CD4-positive, alpha-beta memory T cell (primary cell): ENCODE measurements at regions of chr1 and their contacts with region 1.

Region 1: DNA sequence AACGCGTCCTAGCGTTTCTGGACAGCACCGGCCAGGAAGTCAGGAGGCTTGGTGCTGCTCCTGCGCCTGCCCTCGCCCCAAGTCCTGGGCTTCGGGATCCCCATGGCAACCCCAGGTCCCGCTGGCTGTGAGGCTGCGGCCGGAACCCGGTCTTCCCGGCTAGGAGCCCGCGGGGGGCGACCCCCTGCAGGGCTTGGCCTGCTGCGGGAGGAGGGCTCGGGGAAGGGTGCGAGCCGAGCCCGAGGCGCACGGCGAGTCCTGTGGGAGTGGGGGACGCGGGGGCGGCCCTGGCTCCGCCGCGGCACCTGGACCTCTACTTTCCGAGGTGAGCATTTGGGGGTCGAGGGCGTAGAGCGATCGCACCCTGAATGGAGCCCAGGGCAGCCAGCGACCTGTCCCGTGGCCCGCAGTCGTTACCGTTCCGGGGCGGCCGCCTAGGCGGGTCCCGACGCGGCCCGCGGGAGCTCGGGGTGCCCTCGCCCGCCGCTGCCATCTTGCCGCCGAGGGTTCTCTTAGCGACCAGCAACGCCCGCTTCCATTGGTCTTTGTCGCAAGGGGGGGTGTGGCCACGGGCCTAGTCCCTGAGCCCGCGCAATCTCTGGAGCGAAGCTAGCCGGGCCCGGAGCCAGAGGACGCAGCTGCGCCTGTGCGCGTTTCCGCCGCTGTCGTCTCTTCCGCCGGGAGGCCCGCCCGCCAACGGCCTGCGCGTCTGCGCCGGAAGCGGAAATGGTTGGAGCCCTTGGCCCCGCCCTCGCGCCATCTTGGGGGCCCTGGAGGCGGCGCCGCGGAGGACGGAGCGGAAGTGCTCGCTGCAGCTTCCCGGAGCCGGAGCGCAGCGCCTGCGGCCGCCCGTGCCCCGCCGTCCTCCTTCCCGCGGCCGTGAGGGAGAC is at the starts of genes MORN1 and RER1:
- DNase-seq: peak; percentile 98 to 100 (median 99)
- H3K4me3 ChIP-seq: peak within 1 kb of the TSS; percentile 57 to 75
- H3K4me3 Mint-ChIP-seq: peak within 1 kb of the TSS; percentile 85 to 93 (median 90)
- H3K27ac ChIP-seq: peak within 1 kb of the TSS; percentile 76
- H3K27ac Mint-ChIP-seq: peak within 1 kb of the TSS; percentile 87 to 95 (median 93)
- H3K4me1 ChIP-seq: peaks cover 37% of the 10 kb centered on the region
- H3K4me1 Mint-ChIP-seq: peaks cover 20 to 49% (median 38%) of the 10 kb centered on the region in 4 donors
- H3K27me3 ChIP-seq: no peaks in the 10 kb centered on the region
- H3K27me3 Mint-ChIP-seq: no peaks in the 10 kb centered on the region
- total RNA-seq, gene MORN1: 12.5 to 15.3 TPM
- total RNA-seq, gene RER1: 149 to 151 TPM

Region 2: DNA sequence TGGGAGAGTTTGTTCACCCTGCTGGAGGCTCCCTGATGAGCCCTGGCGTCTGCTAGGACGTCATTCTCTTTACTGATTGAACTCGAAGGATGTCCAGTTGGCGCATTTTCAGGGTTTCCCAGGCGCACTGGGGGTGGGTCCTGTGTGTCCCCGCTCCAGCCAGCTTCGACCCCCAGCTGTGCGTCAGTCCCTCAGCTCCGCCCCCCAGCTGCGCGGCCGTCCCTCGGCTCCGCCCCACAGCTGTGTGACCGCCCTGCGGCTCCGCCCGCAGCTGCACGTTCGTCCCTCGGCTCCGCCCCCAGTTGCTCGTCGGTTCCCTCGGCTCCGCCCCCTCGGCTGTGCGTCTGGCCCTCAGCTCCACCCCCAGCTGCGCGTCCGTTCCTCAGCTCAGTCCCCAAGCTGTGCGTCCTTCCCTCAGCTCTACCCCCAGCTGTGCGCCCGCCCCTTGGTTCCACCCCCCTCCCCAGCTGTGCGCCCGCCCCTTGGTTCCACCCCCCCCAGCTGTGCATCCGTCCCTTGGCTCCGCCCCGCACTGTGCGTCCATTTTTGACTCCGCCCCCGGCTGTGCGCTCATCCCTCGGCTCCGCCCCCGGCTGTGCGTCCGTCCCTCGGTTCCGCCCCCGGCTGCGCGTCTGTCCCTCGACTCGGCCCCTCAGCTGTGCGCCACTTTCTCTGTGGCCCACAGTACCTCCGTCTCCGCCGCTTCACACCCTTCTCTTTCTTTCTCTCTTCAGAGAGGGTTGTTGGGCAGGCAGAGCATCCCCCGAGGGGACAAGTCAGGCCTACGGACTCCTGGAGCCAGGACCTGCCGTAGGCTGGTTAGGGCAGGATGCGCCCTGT is 258.0 kb before region 1 on chr1:
- CTCF ChIA-PET with region 1: no interaction called
- POLR2A ChIA-PET with region 1: interaction called, 3 read pairs
- intact Hi-C with region 1: loop called (anchors 2 kb)
- DNase-seq: peak; percentile 97 to 98 (median 98)
- H3K4me3 ChIP-seq: peak overlapping the region; percentile 61 to 77
- H3K4me3 Mint-ChIP-seq: peak overlapping the region; percentile 82 to 92 (median 85)
- H3K27ac ChIP-seq: peak overlapping the region; percentile 64
- H3K27ac Mint-ChIP-seq: peak overlapping the region; percentile 81 to 98 (median 97)
- H3K4me1 ChIP-seq: peaks cover 11% of the 10 kb centered on the region
- H3K4me1 Mint-ChIP-seq: peaks cover 10 to 47% (median 28%) of the 10 kb centered on the region in 4 donors
- H3K27me3 ChIP-seq: no peaks in the 10 kb centered on the region
- H3K27me3 Mint-ChIP-seq: no peaks in the 10 kb centered on the region

Region 3: DNA sequence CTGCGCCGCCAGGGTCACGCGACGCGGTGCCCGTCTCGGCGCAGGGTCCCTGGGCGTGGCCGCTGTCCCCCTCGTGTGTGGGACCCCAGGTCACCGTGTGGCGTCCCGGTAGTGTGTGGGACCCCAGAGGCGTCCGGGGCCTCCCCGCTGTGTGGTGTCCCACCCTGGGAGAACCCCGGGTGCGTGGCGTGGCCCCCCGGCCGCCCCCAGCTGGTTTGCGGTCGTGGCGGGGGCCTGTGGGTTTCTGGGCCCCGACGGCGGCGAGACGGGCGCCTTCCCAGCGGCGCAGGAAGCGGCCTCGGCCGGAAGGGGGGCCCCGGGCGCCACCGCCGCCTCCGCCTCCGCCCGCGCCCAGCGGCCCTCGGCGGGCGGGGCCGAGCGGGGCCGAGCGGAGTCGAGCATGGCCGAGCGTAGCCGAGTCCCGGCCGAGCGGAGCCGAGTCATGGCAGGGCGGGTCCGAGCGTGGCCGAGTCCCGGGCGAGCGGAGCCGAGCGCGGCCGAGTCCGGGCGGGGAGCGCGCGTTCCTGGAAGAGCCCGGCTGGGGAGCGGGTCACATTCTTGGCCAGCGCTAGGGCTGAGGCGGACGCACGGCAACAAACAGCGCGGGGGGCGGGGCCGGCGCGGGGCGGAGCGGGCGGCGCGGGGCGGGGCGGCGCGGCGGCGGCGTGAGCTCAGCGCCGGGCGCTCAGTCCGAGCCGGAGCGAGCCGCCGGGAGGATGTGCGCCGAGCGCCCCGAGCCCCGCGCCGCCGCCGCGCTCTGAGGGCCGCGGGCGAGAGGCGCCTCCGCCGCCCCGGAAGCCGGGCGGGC is 163.7 kb before region 1 on chr1:
- CTCF ChIA-PET with region 1: no interaction called
- POLR2A ChIA-PET with region 1: interaction called, 25 read pairs
- intact Hi-C with region 1: no loop called
- DNase-seq: peak; percentile 90 to 98 (median 96)
- H3K4me3 ChIP-seq: no peak overlapping the region
- H3K4me3 Mint-ChIP-seq: peak overlapping the region in 7 of 8 donors; percentile 51 to 82 (median 67)
- H3K27ac ChIP-seq: peak overlapping the region; percentile 26
- H3K27ac Mint-ChIP-seq: peak overlapping the region in 4 of 7 donors; percentile 41 to 79 (median 59)
- H3K4me1 ChIP-seq: peaks cover 20% of the 10 kb centered on the region
- H3K4me1 Mint-ChIP-seq: peaks cover 6 to 27% (median 16%) of the 10 kb centered on the region in 4 donors
- H3K27me3 ChIP-seq: no peaks in the 10 kb centered on the region
- H3K27me3 Mint-ChIP-seq: peaks cover 0 to 4% of the 10 kb centered on the region in 2 donors

Region 4: DNA sequence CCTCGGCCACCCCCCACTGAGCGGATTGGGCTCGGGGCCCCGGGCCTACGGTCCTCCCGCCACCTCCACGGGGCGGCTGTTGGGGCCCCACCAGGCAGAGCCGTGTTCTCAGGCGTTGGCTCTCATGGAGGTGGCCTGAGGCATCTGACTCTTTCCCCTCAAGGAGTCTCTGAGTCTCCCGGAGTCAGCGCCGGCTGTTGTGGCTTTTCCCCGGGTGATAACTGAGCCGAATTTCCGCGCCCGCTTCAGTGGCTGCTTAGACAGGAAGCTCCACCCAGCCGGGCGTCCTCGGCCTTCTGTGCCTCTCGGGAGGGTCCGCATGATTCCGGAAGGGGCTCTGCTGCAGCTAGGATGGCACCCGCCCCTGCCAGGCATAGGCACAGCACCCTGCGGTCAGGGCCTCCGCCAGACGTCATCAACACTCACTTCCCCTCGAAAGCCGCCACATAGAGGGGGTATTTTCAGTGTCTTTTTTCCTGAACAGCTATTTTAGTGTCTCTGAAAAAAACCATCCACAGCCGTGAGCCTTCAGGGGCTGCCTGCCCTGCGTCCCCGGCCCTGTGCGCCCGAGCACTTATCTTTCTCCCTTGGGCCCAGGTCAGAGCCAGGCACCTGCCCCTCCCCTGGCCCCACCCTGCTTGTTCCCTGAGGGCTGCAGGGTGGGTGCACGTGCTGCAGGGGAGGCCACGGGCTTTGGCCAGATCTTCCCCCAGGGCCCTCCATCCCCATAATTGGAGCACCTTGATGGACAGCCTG is 90.3 kb before region 1 on chr1:
- CTCF ChIA-PET with region 1: no interaction called
- POLR2A ChIA-PET with region 1: interaction called, 3 read pairs
- intact Hi-C with region 1: loop called (anchors 1 kb)
- DNase-seq: peak; percentile 96 to 99 (median 97)
- H3K4me3 ChIP-seq: peak overlapping the region; percentile 47 to 57
- H3K4me3 Mint-ChIP-seq: peak overlapping the region; percentile 77 to 92 (median 86)
- H3K27ac ChIP-seq: peak overlapping the region; percentile 96
- H3K27ac Mint-ChIP-seq: peak overlapping the region; percentile 99 to 100 (median 99)
- H3K4me1 ChIP-seq: peaks cover 67% of the 10 kb centered on the region
- H3K4me1 Mint-ChIP-seq: peaks cover 15 to 71% (median 46%) of the 10 kb centered on the region in 4 donors
- H3K27me3 ChIP-seq: no peaks in the 10 kb centered on the region
- H3K27me3 Mint-ChIP-seq: no peaks in the 10 kb centered on the region

Region 5: GRCh38 chr1:2525920-2526823 is 134.9 kb after region 1 on chr1 and contains the start of gene PANK4:
- CTCF ChIA-PET with region 1: no interaction called
- POLR2A ChIA-PET with region 1: interaction called, 11 read pairs
- intact Hi-C with region 1: loop called (anchors 1 kb)
- DNase-seq: peak; percentile 86 to 90 (median 89)
- H3K4me3 ChIP-seq: peak within 1 kb of the TSS; percentile 31 to 96
- H3K4me3 Mint-ChIP-seq: peak within 1 kb of the TSS; percentile 89 to 97 (median 95)
- H3K27ac ChIP-seq: peak within 1 kb of the TSS; percentile 86
- H3K27ac Mint-ChIP-seq: peak within 1 kb of the TSS; percentile 86 to 98 (median 97)
- H3K4me1 ChIP-seq: peaks cover 64% of the 10 kb centered on the region
- H3K4me1 Mint-ChIP-seq: peaks cover 27 to 63% (median 47%) of the 10 kb centered on the region in 4 donors
- H3K27me3 ChIP-seq: peaks cover 9% of the 10 kb centered on the region
- H3K27me3 Mint-ChIP-seq: peaks cover 5 to 11% of the 10 kb centered on the region in 2 donors
- total RNA-seq, gene PANK4: 88.9 to 93.7 TPM

Region 6: GRCh38 chr1:2586154-2587070 is 195.1 kb after region 1 on chr1 and contains the start of gene PRXL2B:
- CTCF ChIA-PET with region 1: no interaction called
- POLR2A ChIA-PET with region 1: interaction called, 25 read pairs
- intact Hi-C with region 1: loop called (anchors 1 kb)
- DNase-seq: peak; percentile 95 to 98 (median 95)
- H3K4me3 ChIP-seq: peak within 1 kb of the TSS; percentile 52 to 72
- H3K4me3 Mint-ChIP-seq: peak within 1 kb of the TSS; percentile 87 to 98 (median 92)
- H3K27ac ChIP-seq: peak within 1 kb of the TSS; percentile 90
- H3K27ac Mint-ChIP-seq: peak within 1 kb of the TSS; percentile 95 to 99 (median 97)
- H3K4me1 ChIP-seq: peaks cover 42% of the 10 kb centered on the region
- H3K4me1 Mint-ChIP-seq: peaks cover 22 to 56% (median 36%) of the 10 kb centered on the region in 4 donors
- H3K27me3 ChIP-seq: no peaks in the 10 kb centered on the region
- H3K27me3 Mint-ChIP-seq: no peaks in the 10 kb centered on the region
- total RNA-seq, gene PRXL2B: 26.5 to 27.2 TPM